ENCODE measurements at regions of chr19 and their contacts with region 1.

Region 1: DNA sequence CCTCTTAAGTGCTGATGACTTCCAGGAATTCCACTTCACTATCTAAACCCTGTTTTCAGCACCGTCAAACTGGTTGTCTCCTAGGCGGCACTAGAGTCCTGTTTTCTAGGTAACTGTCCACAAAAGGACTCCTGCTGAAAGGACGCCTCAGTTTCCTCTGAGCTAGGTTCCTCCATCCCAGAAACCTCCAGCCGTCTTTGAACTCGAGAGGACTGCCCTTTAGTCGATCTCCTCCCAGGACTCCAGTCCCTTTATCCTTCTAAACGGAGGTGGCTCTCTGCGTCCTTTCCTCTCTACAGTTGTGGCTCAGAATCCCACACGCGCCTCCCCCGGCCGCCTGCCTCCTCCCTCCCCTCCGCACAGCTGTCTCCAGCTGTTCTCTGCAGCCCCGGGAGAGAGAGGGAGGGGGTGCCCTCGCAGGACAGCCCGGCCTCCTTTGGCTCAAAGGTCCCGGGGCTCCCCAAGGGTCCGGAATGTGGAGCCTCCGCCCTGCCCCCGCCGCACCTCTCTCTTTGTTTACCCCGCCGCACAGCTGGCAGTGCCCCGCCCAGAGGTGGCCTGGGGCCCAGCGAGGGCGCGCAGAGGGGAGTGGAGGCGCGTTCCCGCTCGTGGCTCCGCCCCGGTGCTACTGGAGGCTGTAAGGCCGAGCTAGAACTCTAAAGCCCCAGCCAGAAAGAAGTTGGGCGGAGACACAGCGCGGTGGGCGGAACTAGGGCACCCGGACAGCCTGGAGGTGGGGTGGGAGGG is 2.4 kb downstream of the LTBP4 start:
- DNase-seq: peak; percentile 97

Region 2: DNA sequence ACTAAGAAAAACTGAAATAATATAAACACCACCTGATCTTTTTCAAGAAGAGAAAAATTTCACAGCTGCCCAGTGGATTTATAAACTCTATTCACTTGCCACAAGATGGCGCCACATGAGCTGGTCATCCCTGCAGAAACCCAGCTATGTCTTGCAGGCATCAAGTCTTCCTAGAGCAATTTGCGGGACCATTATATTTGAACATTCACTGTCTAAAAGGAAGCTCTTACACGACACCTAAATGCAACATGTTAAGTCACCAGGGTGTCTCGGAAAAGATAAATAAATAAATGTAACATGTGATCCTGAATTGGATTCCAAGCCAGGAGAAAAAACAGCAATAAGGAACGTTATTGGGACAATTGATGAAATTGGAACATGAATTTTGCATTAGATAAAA is 298.2 kb before region 1 on chr19:
- intact Hi-C with region 1: loop called (anchors 5 kb)
- DNase-seq: no peak

Region 3: DNA sequence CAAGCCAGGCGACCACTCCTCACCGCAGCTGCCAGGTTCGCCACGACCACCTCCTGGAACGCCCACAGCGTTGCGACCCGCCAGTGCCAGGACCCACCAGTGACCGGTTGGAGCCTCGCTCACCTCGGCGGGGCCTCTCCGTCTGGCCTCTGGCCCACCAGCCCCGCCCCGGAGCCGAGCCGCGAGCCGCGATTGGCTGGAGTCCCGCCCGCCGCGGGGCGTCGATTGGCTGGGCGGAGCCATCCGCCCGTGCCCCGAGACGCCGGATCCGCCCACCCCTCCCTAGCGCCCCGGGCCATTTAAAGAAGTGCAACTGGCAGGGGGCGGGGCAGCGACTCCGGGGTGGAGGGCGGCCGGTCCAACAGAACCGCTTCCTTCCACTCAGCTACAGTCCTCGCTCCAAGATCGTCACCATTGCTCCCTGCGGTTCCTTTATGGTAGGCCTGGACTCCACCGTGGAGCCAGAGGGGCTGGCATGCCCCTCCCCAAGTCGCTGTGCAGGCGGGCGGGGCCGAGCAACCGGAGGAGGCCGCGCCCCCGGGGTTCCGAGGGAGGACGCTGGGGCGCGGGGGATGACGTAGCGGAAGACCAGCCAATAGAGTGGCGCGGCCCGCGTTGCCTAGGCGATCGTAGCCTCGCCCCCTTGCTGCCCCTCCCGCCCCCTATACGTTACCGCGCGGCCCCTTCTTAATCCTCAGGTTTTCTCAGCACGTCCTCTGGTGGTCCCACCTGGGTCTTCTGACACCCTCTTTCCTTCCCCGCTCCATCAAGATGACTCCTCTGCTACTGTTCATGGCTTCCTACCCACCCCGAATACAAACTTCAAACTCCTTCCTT is 159.2 kb before region 1 on chr19 and contains the start of gene SERTAD3:
- intact Hi-C with region 1: loop called (anchors 5 kb)
- DNase-seq: peak; percentile 98
- total RNA-seq, gene SERTAD3: 33.9 TPM

Region 4: DNA sequence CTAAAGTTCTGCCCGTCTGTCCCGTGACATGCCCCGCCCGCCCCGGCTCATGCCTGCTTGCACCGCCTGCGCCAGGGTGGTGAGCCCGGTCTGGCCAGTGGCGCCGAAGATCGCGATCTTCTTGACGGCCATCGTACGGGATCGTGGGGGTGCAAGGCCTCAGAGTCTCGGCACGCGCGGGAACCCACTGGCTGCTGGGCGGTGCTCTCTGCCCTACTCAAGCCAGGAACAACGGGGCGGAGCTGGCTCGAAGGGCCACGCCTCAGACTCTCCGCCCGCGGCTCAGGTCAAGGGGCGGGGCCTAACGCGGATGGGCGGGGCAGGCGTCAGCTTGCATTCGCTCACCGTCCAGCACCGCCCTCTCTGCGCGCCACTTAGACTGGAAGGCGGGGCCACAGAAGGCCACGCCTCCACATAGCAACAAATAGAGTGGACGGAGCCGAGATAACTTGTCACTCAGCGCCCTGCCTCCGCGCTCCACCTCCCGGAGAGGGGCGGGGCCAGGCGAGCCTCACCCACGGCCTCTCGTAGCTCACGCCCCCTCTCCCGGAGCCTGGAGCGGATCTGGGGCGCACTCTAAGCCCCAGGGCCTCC is 137.9 kb before region 1 on chr19 and contains the start of gene BLVRB:
- intact Hi-C with region 1: loop called (anchors 5 kb)
- DNase-seq: peak; percentile 100
- total RNA-seq, gene BLVRB: 81.6 TPM

Region 5: DNA sequence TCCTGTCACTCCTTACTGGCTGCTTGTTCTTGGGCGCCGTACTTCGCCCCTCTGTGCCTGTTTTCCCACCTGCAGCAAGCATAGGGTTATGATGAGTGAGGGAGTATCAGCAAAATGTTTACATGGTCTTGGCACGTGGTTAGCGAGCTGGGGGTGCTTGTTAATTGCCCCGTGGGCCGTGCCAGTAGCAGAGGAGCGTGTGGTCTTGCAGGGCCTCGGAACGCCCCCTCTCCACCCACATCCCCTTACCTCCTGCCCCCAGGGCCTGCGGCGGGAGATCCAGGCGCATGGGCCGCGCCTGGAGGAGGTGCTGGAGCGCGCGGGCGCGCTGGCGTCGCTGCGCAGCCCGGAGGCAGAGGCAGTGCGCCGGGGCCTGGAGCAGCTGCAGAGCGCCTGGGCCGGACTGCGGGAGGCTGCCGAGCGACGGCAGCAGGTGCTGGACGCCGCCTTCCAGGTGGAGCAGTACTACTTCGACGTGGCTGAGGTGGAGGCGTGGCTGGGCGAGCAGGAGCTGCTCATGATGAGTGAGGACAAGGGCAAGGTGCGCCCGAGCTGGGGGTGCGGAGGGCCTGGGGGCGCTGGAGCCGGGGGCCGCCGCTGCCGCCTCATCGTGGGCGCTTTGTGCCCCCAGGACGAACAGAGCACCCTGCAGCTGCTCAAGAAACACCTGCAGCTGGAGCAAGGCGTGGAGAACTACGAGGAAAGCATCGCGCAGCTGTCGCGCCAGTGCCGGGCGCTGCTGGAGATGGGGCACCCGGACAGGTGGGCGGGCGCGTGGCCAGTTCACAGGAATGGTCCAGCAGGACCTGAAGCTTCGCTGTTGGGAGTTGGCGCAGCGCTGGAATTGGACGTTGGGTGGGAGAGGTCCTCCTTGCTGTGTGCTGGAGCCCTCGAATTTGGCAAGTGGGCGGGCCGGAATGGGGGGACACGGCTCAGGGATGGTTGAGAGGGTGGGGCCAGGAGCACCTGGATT is 49.4 kb before region 1 on chr19:
- intact Hi-C with region 1: no loop called
- DNase-seq: no peak

Region 6: GRCh38 chr19:40570313-40571004 is 33.1 kb before region 1 on chr19:
- intact Hi-C with region 1: loop called (anchors 2 kb)
- DNase-seq: peak; percentile 99

Region 7: GRCh38 chr19:40640744-40641143 is 37.2 kb after region 1 on chr19:
- intact Hi-C with region 1: loop called (anchors 2 kb)
- DNase-seq: no peak

Region 8: GRCh38 chr19:40690693-40691420 is 87.3 kb after region 1 on chr19:
- intact Hi-C with region 1: no loop called
- DNase-seq: peak; percentile 97

Region 9: DNA sequence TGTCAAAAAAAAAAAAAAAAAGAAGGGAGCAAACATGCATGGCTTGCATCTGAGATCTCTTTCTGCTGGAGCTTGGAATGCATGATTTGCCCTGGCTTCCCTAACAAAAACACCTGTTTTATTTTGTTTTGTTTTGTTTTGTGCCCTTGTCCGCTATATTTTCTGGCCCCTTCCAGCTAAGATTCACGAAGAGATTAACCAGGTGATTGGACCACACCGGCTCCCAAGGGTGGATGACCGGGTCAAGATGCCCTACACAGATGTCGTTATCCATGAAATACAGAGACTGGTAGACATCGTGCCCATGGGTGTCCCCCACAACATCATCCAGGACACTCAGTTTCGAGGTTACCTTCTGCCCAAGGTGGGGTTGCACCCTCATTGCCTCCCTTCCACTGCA is 294.4 kb after region 1 on chr19:
- intact Hi-C with region 1: no loop called
- DNase-seq: no peak

Measured in cardiac septum (tissue), 1 donor.